Right cardiac atrium (tissue), 5 donors: ENCODE measurements at regions of chr17 and their contacts with region 1.

Region 1: GRCh38 chr17:60577147-60577915 is 22.7 kb upstream of the PPM1D start:
- DNase-seq: peak in 1 of 3 donors; percentile 68
- ATAC-seq: peak; percentile 79 to 89
- H3K4me3 ChIP-seq: peak overlapping the region; percentile 56
- H3K27ac ChIP-seq: peak overlapping the region; percentile 51
- H3K4me1 ChIP-seq: no peaks in the 10 kb centered on the region
- H3K27me3 ChIP-seq: no peaks in the 10 kb centered on the region

Region 2: DNA sequence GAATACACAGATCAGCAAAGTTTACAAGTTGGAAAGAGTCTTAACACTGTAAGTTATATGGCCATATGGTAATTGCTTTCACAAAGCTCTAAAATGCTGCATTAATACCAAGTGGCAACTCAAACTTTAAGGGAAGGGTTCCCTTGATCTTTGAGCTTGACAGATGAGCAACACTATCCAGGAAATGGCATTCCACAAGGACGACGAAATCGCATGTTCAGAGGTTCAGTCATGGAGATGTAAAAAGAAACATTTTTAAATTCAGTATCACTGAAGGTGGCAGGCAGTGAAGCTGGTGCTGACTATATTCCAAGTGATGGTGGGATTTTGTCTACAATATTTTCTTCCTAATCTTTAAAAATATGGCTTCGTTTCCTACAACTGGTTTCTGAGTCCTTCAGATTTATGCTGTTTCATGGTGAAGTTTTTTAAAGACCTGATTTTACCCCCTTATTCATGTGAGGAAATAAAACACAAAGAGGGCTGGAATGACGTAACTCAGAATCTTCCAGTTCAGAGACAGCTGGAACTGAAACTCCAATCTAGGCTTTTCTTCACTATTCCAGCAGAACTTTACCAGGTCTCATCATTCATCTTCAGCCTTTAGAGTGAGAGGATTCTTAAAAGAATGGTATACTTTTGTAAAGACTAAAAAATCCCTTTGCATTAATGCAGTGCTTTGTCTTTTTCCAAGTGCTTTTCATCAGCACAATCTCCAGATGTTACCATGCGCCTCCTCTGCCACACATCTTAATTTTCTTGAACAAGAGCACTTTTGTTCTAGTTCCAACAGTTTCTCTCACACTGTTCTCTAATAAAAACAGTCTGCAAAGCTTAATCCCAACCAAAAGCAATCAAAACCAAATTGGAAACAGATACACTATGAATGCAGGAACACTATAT is 134.8 kb before region 1 on chr17:
- intact Hi-C with region 1: no loop called
- DNase-seq: no peak
- ATAC-seq: no peak
- H3K4me3 ChIP-seq: no peak overlapping the region
- H3K27ac ChIP-seq: no peak overlapping the region
- H3K4me1 ChIP-seq: no peaks in the 10 kb centered on the region
- H3K27me3 ChIP-seq: no peaks in the 10 kb centered on the region

Region 3: GRCh38 chr17:60639019-60639330 is 61.6 kb after region 1 on chr17:
- intact Hi-C with region 1: loop called in 3 of 4 experiments (anchors 5 to 10 kb)
- DNase-seq: no peak
- ATAC-seq: no peak
- H3K4me3 ChIP-seq: no peak overlapping the region
- H3K27ac ChIP-seq: no peak overlapping the region
- H3K4me1 ChIP-seq: peaks cover 3% of the 10 kb centered on the region
- H3K27me3 ChIP-seq: no peaks in the 10 kb centered on the region

Region 4: GRCh38 chr17:60766778-60767190 is 189.5 kb after region 1 on chr17:
- intact Hi-C with region 1: no loop called
- DNase-seq: no peak
- ATAC-seq: no peak
- H3K4me3 ChIP-seq: no peak overlapping the region
- H3K27ac ChIP-seq: no peak overlapping the region
- H3K4me1 ChIP-seq: no peaks in the 10 kb centered on the region
- H3K27me3 ChIP-seq: no peaks in the 10 kb centered on the region

Region 5: DNA sequence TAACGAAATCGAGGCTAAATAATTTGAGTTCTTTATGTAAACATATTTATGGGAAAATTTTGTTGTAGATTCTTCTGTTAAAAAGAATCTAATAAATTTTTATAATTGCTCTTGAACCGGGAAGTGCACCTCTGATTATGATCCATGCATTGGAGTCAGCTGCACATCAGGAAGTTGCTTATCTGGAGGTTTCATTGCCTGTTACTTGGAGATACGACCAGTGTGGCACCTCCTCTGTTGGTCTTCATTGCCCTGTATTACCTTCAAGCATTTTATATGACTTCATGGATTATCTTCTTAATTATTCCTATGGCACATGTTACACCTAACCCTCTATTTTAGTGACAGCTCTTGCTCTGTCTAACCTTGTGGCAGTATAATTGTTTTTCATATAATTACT is 509.7 kb after region 1 on chr17:
- intact Hi-C with region 1: no loop called
- DNase-seq: no peak
- ATAC-seq: no peak
- H3K4me3 ChIP-seq: no peak overlapping the region
- H3K27ac ChIP-seq: no peak overlapping the region
- H3K4me1 ChIP-seq: no peaks in the 10 kb centered on the region
- H3K27me3 ChIP-seq: no peaks in the 10 kb centered on the region